Activated CD4-positive, alpha-beta T cell treated with anti-CD3 and anti-CD28 coated beads, Interleukin-2, amount 10 ng/mL, durations not matched to agents 24 days and 14 days (primary cell): ENCODE measurements at regions of chr3 and their contacts with region 1.

Region 1: GRCh38 chr3:128447561-128448013 is 19.1 kb downstream of the DNAJB8 start:
- DNase-seq: peak; percentile 87
- H3K4me3 Mint-ChIP-seq: peak overlapping the region; percentile 61
- H3K27ac Mint-ChIP-seq: peak overlapping the region; percentile 93
- H3K4me1 Mint-ChIP-seq: peaks cover 29% of the 10 kb centered on the region
- H3K27me3 Mint-ChIP-seq: peaks cover 10% of the 10 kb centered on the region

Region 2: DNA sequence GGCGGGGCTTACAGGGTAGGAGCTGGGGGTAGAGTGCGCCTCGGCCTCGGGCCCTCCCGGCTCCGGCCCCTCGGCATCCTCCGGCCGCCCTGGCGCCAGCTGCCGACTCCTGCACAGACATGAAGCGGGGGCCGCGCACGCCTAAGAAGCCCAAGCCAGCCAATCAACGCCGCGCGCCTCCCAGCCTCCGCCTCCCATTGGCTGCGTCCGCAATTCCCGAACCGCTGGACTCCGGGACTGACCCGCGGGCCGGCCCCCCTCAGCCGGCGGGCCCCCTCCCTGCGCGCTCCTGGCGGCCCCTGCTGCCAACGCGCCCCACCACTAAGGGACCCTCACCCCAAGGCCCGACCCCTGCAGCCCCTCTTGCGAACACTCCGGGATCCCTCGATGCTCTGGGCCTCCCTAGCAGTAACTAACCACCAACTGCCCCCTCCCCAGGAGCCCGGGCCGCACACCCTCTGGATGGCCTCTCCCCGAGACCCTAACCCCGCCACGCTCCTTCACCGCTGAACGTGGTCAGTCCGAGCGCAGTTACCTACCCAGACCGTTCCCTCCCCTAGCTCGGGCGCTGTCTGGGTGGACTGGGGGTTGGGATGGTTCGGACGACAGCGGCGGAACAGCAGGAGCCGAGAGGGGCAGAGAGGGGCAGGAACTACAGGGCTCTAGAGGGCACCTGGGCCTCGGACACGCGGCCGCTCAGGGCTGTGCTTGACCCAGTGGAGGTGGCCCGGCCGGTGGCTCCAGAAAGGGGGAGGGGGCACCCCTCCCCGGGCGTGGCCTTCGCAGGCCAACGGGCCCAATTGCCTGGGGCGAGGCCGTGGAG is 40.4 kb after region 1 on chr3:
- intact Hi-C with region 1: loop called (anchors 5 kb)
- DNase-seq: peak; percentile 73
- H3K4me3 Mint-ChIP-seq: peak overlapping the region; percentile 82
- H3K27ac Mint-ChIP-seq: no peak overlapping the region
- H3K4me1 Mint-ChIP-seq: peaks cover 20% of the 10 kb centered on the region
- H3K27me3 Mint-ChIP-seq: peaks cover 69% of the 10 kb centered on the region

Region 3: GRCh38 chr3:129878372-129878771 is 1430.8 kb after region 1 on chr3:
- intact Hi-C with region 1: no loop called
- DNase-seq: no peak
- H3K4me3 Mint-ChIP-seq: no peak overlapping the region
- H3K27ac Mint-ChIP-seq: no peak overlapping the region
- H3K4me1 Mint-ChIP-seq: peaks cover 3% of the 10 kb centered on the region
- H3K27me3 Mint-ChIP-seq: no peaks in the 10 kb centered on the region